Panc1 (cell line): ENCODE measurements at regions of chr17 and their contacts with region 1.

Region 1: DNA sequence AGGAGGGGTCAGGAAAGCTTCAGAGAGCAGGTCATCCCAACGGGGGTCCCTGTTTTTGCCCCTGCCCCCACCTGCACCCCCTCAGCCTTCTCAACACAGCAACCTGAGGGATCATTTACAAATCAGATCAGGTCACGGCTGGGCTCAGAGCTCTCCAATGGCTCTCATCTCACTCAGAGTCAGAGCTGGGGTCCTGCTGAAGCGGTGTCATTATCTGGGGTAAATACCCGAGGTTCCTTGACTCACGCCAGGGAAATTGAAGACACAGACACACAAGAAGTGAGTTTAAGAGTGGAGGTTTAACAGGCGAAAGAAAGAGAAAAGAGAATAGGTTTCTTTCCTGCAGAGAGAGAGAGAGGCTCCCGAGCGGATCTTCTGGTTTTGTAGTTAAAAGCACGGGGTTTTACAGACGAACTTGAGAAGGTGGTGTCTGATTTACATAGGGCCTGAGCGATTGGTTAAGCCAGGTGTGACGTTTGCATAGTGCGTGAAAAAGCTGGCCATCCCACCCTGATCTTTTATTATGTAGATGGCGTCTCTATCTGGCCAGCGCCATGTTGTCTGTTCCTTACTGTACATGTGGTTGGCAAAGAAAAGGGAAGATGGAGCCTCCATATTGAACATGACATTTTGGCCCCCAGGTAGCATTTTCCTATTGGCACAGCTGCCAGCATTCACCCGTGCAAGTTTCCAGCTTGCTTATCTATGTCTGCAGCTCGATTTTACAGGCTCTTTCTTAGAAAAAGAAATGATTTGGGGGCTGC is 51.4 kb downstream of the WSB1 start:
- DNase-seq: no peak
- ATAC-seq: no peak
- H3K4me3 ChIP-seq: no peak overlapping the region
- H3K27ac ChIP-seq: no peak overlapping the region
- H3K4me1 ChIP-seq: peaks cover 11% of the 10 kb centered on the region; the same call in 1 of the 2 replicates
- H3K27me3 ChIP-seq: no peaks in the 10 kb centered on the region
- CTCF ChIP-seq: no peak

Region 2: DNA sequence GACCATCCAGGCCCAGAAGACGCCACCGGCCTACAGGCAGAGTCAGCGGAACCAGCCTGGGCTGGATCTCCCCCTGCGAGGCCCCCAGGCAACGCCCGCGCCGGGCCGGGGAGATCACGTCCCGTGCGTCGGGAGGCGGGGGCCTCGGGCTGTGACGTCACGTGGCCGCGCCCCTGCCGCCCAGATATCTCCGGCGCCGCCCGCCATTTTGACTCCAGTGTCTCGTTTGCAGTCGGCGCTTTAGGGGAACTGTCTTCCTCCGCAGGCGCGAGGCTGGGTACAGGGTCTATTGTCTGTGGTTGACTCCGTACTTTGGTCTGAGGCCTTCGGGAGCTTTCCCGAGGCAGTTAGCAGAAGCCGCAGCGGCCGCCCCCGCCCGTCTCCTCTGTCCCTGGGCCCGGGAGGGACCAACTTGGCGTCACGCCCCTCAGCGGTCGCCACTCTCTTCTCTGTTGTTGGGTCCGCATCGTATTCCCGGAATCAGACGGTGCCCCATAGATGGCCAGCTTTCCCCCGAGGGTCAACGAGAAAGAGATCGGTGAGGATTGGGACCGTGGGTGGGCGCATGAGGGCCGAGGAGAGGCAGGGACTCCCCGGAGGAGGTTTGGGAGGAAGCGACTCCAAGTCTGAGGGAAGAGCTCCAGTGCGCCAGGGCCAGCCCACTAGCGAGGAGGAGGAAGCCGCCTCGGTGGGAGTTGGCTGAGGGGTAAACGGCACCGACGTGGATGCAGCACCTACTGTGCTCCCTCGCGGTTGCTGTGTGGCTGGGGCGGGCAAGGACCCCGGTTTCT is 51.2 kb before region 1 on chr17 and contains the start of gene WSB1:
- CTCF ChIA-PET with region 1: interaction called, 3 read pairs
- POLR2A ChIA-PET with region 1: no interaction called
- in situ Hi-C with region 1: no loop called
- intact Hi-C with region 1: loop called (anchors 10 kb)
- DNase-seq: peak; percentile 35
- ATAC-seq: peak; percentile 96
- H3K4me3 ChIP-seq: peak within 1 kb of the TSS; percentile 87 to 91
- H3K27ac ChIP-seq: peak within 1 kb of the TSS; percentile 95
- H3K4me1 ChIP-seq: peaks cover 19% of the 10 kb centered on the region
- H3K27me3 ChIP-seq: no peaks in the 10 kb centered on the region
- CTCF ChIP-seq: no peak
- total RNA-seq, gene WSB1: 114 TPM